ENCODE measurements at regions of chr2 and their contacts with region 1.

Region 1: DNA sequence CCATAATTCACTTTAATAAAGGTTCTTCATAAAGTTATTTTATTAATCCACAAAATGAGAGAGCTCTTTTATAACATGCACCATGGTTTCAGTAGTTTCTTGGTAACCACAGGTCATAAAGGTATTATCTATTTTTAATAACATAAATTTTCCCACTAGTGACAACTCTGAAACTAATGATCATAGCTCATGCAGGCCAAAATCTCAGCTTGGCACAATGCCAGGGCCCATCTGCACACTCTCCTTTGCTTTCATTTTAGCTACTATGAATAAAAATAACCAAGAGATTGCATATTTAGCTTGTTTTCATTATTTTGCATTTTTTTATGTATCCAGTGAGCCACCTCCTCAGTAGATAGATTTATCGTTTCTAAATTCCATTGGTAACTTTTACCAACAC is 691.8 kb upstream of the CHAC2 start:
- DNase-seq: no peak
- H3K4me3 ChIP-seq: no peak overlapping the region
- H3K27ac ChIP-seq: no peak overlapping the region
- H3K4me1 ChIP-seq: no peaks in the 10 kb centered on the region
- H3K27me3 ChIP-seq: no peaks in the 10 kb centered on the region
- CTCF ChIP-seq: no peak
- POLR2A ChIP-seq: no peak

Region 2: GRCh38 chr2:53286345-53286744 is 210.6 kb after region 1 on chr2:
- intact Hi-C with region 1: loop called (anchors 5 kb)
- DNase-seq: no peak
- H3K4me3 ChIP-seq: no peak overlapping the region
- H3K27ac ChIP-seq: no peak overlapping the region
- H3K4me1 ChIP-seq: no peaks in the 10 kb centered on the region
- H3K27me3 ChIP-seq: no peaks in the 10 kb centered on the region
- CTCF ChIP-seq: no peak
- POLR2A ChIP-seq: no peak